OCI-LY7 (cell line): ENCODE measurements at regions of chr13 and their contacts with region 1.

Region 1: GRCh38 chr13:71546881-71547280 is 320.1 kb downstream of the DACH1 start:
- DNase-seq: no peak
- H3K4me3 ChIP-seq: no peak overlapping the region
- H3K27ac ChIP-seq: no peak overlapping the region
- H3K4me1 ChIP-seq: no peaks in the 10 kb centered on the region
- CTCF ChIP-seq: no peak

Region 2: GRCh38 chr13:71503781-71504180 is 43.1 kb before region 1 on chr13:
- CTCF ChIA-PET with region 1: no interaction called
- POLR2A ChIA-PET with region 1: no interaction called
- intact Hi-C with region 1: loop called (anchors 2 kb)
- DNase-seq: no peak
- H3K4me3 ChIP-seq: no peak overlapping the region
- H3K27ac ChIP-seq: no peak overlapping the region
- H3K4me1 ChIP-seq: no peaks in the 10 kb centered on the region
- CTCF ChIP-seq: no peak

Region 3: DNA sequence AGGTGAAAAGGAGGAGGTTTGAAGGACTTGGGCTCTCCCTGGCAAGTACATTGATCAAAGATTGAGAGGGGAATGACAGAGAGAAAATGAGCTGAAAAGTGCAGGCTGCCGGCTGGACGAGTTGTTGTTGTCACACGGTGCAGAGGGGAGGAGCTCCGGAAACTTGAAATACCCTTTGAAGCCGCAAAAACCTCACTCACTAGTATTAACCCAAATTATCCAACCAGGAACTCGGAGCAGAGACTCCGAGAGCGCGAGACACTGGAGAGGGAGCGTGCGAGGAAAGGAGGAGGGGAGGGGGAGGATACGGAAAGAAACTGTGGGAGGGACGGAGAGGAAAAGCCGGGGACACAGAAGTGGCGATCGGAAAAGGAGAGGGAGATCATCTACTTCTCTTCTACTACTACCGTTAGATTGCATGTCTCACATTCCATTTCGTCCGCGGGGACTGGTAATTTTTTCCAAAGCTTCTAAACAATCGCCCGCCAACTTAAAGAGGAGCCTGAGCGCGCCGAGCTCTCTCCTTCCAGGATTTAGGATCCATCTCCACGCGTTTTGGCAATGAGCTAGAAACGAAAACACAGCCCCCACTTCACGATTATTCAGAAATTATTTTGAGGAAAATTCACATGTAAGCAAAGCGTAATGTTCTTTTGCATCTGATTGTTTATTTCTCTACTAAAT is 320.4 kb after region 1 on chr13 and contains the start of gene DACH1:
- CTCF ChIA-PET with region 1: no interaction called
- POLR2A ChIA-PET with region 1: no interaction called
- intact Hi-C with region 1: no loop called
- DNase-seq: no peak
- H3K4me3 ChIP-seq: no peak within 1 kb of the TSS
- H3K27ac ChIP-seq: no peak within 1 kb of the TSS
- H3K4me1 ChIP-seq: no peaks in the 10 kb centered on the region
- CTCF ChIP-seq: no peak
- total RNA-seq, gene DACH1: not detected in 2 replicates